HEK293 (cell line): ENCODE measurements at regions of chr3 and their contacts with region 1.

Region 1: GRCh38 chr3:185659942-185660921 is 74.1 kb downstream of the SENP2 start:
- H3K4me3 ChIP-seq: no peak overlapping the region
- H3K27ac ChIP-seq: no peak overlapping the region
- H3K4me1 ChIP-seq: no peaks in the 10 kb centered on the region
- CTCF ChIP-seq: peak; percentile 60; the same call in 1 of the 2 replicates

Region 2: GRCh38 chr3:185640308-185640707 is 19.9 kb before region 1 on chr3:
- CTCF ChIA-PET with region 1: interaction called, 11 read pairs
- POLR2A ChIA-PET with region 1: no interaction called
- H3K4me3 ChIP-seq: no peak overlapping the region
- H3K27ac ChIP-seq: no peak overlapping the region
- H3K4me1 ChIP-seq: no peaks in the 10 kb centered on the region
- CTCF ChIP-seq: no peak

Region 3: GRCh38 chr3:185677146-185677829 is 17.1 kb after region 1 on chr3:
- CTCF ChIA-PET with region 1: interaction called, 22 read pairs
- POLR2A ChIA-PET with region 1: no interaction called
- H3K4me3 ChIP-seq: no peak overlapping the region
- H3K27ac ChIP-seq: no peak overlapping the region
- H3K4me1 ChIP-seq: no peaks in the 10 kb centered on the region
- CTCF ChIP-seq: no peak

Region 4: DNA sequence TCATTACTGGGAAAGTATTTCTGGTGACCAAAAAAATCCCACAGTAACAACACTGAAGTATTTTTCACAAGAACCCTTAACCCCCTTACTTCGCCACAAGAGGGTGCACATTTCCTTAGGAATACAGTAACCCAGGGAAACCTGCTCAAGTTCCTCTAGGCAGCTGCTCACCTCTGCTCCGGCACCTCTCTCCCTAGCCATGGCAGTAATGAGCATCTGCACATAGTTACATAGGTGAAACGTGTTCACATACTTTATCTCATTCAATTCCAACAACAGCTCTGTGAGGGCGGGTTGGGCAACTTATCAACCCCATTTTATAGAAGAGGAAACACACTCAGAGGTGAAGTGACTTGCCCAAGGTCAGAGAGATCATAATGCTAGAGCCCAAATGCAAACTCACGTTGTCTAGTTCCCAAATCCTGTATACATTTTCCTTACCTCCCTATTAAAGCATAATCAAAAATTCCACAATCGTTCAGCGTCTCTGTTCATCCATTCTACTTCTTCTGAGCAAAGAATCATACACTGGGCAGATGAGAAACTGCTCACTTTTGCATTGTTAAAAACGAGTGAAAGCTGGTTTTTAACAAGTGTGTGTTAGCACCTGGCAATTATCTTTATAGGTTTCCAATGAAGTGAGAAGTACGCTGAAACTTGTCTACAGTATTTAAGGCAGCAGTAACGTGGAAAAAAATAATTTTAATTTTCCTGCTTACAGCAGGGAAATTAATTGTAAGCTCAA is 73.9 kb after region 1 on chr3:
- CTCF ChIA-PET with region 1: interaction called, 23 read pairs
- POLR2A ChIA-PET with region 1: no interaction called
- H3K4me3 ChIP-seq: no peak overlapping the region
- H3K27ac ChIP-seq: no peak overlapping the region
- H3K4me1 ChIP-seq: peaks cover 14% of the 10 kb centered on the region; the same call in 1 of the 2 replicates
- CTCF ChIP-seq: peak; percentile 31; the same call in 1 of the 2 replicates

Region 5: DNA sequence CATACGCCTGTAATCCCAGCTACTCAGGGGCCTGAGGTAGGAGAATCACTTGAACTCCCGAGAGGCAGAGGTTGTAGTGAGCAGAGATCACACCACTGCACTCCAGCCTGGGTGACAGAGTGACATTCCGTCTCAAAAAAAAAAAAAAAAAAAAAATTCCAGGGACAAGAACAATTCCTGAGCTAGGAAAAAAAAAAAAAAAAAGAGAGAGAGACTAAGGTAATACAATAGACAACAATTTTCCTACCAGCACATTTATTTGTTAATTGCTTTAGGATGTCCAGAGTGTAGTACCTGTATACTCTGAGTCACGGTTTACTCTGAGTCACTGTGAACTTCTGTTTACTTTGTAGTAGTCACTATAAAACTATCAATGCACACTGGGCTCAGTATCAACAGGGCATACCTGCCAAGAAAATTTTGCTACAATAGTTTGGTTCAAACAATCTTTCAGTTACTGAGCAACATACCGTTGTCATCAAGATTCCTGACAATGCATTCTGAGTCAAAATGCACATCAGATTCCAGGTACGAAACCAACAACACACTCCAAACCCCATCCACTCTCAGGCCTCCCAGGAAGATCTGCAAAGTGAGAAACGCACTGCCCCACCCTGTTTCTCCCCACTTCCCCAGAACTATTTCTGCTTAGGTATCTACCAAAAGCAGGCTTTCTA is 136.3 kb after region 1 on chr3:
- CTCF ChIA-PET with region 1: no interaction called
- POLR2A ChIA-PET with region 1: no interaction called
- H3K4me3 ChIP-seq: no peak overlapping the region
- H3K27ac ChIP-seq: no peak overlapping the region
- H3K4me1 ChIP-seq: no peaks in the 10 kb centered on the region; the same call in 1 of the 2 replicates
- CTCF ChIP-seq: no peak

Region 6: DNA sequence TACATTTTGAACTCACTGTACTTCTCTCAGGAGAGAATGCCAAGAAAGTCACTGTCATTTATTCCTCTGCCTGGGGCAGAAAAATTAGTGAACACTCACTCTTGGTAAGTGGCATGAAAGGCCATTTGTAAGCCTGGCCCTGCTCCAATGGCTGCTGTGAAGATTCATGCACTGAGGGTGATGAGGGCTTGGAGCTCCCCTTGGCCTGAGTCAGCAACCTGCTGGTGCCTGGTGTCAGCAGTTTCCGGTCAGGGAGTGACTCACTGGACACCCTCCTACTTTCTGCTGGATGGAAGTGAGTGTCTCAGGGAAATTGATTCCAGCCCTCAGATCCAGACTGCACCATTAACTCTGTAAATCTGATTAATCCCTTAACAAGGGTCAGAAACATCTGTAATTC is 240.0 kb after region 1 on chr3:
- CTCF ChIA-PET with region 1: interaction called, 22 read pairs
- POLR2A ChIA-PET with region 1: no interaction called
- H3K4me3 ChIP-seq: no peak overlapping the region
- H3K27ac ChIP-seq: no peak overlapping the region
- H3K4me1 ChIP-seq: no peaks in the 10 kb centered on the region
- CTCF ChIP-seq: no peak

Region 7: DNA sequence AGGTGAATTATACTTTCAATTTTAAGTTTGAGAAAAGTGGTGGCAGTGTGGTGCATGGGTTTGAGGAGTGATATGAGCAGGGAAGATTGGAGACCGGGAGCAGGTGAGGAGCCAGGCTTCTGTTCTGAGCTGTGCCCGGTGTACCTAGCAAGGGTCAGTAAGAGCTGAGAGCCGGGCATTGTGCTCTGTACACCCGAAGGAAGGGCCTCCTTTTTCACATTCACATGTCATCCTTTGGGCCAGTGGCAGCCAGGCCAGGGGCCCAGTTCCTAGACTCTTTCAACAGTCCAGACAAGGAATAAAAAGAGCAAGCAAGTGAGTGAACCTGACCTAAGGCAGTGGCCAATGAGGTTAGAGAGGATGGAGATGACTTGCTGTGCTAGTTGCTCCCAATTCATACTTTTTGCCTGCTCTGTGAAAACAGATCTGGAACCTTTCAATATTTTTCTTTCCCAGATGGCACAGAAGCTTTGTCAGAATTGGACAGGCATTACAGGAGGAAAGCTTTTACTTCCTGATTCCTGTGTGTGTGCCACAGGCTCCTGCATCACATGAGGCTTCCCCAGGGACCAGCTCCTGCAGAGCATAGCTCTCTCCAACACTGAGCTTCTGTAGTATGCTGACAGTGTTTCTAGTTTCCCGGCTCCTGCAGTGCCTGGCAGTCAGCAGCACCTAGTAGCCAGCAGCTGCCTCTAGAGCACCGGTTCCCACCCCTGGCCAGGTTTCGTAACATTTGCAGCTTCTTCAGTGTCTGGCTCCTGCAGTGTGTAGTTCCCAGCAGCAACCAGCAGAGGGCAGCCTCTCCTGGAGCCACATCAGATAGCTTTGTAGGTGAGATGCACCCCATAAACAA is 282.9 kb after region 1 on chr3:
- CTCF ChIA-PET with region 1: interaction called, 18 read pairs
- POLR2A ChIA-PET with region 1: interaction called, 5 read pairs
- H3K4me3 ChIP-seq: no peak overlapping the region
- H3K27ac ChIP-seq: no peak overlapping the region
- H3K4me1 ChIP-seq: no peaks in the 10 kb centered on the region
- CTCF ChIP-seq: peak; percentile 44; the same call in 1 of the 2 replicates

Region 8: GRCh38 chr3:186365202-186365974 is 705.2 kb after region 1 on chr3:
- CTCF ChIA-PET with region 1: no interaction called
- POLR2A ChIA-PET with region 1: no interaction called
- H3K4me3 ChIP-seq: no peak overlapping the region
- H3K27ac ChIP-seq: no peak overlapping the region
- H3K4me1 ChIP-seq: no peaks in the 10 kb centered on the region
- CTCF ChIP-seq: no peak